Activated T-helper 2 cell treated with anti-CD3 and anti-CD28 coated beads, Interferon-gamma antibody, Interleukin-2, Interleukin-4, amounts not matched to agents 10 μg/mL and 5 μg/mL and 100 μg/mL, durations not matched to agents 14 hours and 24 hours and 36 hours (primary cell): ENCODE measurements at regions of chr13 and their contacts with region 1.

Region 1: DNA sequence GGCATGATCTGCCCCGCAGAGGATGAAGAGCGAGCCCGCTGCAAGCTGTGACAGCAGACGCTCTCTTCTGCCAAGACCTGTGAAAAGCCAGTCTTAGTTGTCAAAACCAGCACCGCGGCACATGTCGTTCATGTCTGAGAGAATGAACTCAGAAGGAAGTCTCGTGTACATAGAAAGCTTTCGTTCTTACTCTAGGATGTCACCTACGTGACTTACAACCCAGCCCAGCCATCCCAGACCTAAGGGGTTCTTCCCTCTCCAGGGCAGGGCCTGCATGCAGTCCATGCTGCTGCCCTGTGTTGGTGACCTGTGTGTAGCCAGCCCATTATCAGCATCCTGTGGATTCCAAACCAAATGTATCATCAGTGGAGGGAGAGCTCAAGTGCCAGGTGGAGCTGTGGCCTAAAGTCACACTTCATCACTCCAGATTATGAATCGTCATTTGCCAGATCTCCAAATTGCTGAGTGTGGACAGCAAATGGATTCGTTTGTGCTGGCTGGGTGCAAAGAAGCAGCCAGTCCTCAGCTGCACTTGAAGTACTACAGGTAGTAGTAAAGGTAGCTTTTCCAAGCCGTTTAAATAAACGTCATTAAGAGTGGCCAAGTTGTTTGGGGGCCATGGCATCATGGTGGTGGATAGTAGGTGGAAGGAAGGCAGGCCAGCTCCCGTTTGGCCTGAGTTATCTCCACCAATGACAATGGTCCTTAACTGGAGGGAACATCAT is 73.9 kb upstream of the GPR183 start:
- DNase-seq: peak; percentile 62
- H3K4me3 Mint-ChIP-seq: peak overlapping the region; percentile 27
- H3K27ac Mint-ChIP-seq: peak overlapping the region; percentile 82
- H3K4me1 Mint-ChIP-seq: peaks cover 80% of the 10 kb centered on the region
- H3K27me3 Mint-ChIP-seq: no peaks in the 10 kb centered on the region

Region 2: DNA sequence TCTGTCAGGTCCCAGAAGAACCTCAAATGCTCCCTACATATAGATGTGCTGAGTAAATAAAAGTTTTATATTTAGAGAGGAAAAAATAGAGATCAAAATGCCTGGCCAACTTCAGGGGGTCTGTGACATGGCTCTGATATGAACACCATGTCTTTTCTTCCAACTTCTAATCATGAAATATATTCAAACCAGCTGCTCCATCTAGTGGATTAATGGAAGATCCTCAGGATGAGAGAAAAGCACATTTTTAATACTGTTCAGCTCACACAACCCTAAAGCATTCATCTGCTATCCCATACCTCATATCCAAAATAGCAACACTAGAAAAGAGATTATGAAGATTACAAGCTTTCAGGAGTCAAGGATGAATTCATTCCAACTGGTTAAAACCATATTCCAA is 347.3 kb before region 1 on chr13:
- intact Hi-C with region 1: loop called (anchors 5 kb)
- DNase-seq: no peak
- H3K4me3 Mint-ChIP-seq: no peak overlapping the region
- H3K27ac Mint-ChIP-seq: no peak overlapping the region
- H3K4me1 Mint-ChIP-seq: peaks cover 33% of the 10 kb centered on the region
- H3K27me3 Mint-ChIP-seq: no peaks in the 10 kb centered on the region

Region 3: DNA sequence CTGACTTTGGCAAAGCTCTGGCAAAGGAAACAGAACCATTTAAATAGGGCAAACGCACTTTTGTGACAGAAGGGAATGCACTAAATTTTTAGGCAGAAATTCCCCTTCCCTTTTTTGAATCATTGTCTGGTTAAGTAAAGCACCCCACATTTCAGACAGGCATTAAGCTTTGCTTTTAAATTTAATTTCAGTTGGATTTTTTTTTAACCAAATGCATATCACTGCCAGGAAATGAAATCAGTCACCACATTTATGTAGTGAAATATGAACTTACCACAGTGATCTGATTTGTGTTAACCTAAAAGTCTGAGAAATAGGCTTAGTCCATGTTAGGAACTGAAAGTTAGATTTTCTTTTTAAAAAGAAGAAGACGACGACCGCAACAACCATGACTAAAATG is 84.7 kb before region 1 on chr13:
- intact Hi-C with region 1: loop called (anchors 2 kb)
- DNase-seq: no peak
- H3K4me3 Mint-ChIP-seq: peak overlapping the region; percentile 73
- H3K27ac Mint-ChIP-seq: peak overlapping the region; percentile 87
- H3K4me1 Mint-ChIP-seq: peaks cover 74% of the 10 kb centered on the region
- H3K27me3 Mint-ChIP-seq: no peaks in the 10 kb centered on the region

Region 4: DNA sequence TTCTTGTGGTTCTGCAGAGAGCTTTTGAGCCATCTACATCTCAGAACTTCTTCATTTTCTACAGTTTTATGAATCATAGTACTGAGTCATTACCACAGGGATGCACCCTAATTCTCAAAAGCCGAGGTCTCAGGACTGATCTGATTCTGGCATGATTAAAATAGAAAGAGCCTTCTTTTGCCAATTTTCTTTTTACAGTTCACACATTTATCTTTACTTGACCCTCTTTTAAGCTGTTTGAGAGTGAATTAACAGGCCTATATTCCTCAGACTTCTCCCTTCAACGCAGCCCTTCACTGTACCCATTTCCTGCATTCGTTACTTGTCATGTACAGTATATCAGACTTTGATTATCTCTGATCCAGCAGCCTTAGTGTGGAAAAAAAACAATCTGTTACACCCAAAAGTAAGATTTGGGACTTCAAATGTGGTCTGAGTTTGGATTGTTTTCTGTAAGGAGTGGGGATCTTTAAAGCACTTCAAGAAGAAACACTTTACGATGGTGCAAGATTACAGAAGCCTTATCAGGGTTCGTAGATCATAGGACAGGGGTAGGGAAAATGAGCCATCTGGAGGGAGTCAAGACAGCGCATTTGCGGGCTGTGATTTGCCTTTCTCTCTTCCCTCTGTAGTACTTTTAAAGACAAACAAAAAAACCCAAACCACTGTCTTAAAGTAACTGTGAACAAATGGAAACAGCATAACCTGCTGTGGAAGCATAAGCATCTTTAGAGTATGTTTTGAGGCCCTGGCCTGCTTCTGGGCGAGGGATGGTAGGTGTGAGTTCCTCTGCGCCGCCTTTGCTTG is 58.6 kb before region 1 on chr13:
- intact Hi-C with region 1: loop called (anchors 1 kb)
- DNase-seq: peak; percentile 44
- H3K4me3 Mint-ChIP-seq: peak overlapping the region; percentile 31
- H3K27ac Mint-ChIP-seq: peak overlapping the region; percentile 96
- H3K4me1 Mint-ChIP-seq: peaks cover 60% of the 10 kb centered on the region
- H3K27me3 Mint-ChIP-seq: no peaks in the 10 kb centered on the region

Region 5: GRCh38 chr13:99417201-99418102 is 36.4 kb after region 1 on chr13:
- intact Hi-C with region 1: loop called (anchors 5 kb)
- DNase-seq: no peak
- H3K4me3 Mint-ChIP-seq: peak overlapping the region; percentile 48
- H3K27ac Mint-ChIP-seq: peak overlapping the region; percentile 74
- H3K4me1 Mint-ChIP-seq: peaks cover 51% of the 10 kb centered on the region
- H3K27me3 Mint-ChIP-seq: no peaks in the 10 kb centered on the region